ENCODE measurements at regions of chr4 and their contacts with region 1.

Region 1: DNA sequence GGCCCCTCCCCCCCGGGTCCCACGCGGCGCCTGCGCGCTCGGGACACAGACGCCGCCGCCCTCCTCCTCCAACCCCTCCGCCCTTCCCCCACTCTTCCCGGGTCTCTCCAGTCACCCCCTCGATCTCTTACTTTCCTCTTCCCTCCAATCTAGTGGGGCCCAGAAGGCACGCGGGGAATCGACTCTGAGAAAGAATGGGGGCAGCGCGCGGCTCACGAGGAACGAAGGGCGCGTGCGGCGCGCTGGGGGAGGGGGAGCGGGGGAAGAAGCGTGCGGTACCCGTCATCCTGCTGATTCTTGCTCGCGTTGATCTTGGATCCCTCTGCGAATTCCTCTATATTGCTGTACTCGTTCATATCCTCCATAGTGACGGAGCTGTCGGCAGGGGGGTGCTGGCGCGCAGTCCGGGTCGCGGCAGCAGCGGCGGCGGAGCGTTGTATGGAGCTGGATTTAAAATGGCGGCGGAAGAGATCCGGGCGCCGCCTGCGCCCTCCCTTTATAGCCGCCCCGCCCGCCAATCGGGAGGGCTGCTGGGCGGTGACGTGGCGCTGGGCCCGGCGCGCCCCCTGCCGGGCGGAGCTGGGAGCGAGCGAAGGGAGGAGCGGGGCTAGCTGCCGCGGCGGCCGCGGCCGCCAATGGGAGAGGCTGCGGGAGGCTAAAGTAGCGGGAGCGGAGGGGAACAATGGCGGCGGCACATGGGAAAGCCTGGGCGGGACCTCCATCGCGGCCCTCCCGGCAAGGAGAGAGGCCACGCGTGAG is 1.1 kb downstream of the HNRNPDL start:
- DNase-seq: peak; percentile 57 to 94
- H3K4me3 ChIP-seq: peak overlapping the region; percentile 94 to 95
- H3K27ac ChIP-seq: peak overlapping the region; percentile 98
- H3K4me1 ChIP-seq: peaks cover 3 to 25% of the 10 kb centered on the region in 2 donors
- H3K27me3 ChIP-seq: no peaks in the 10 kb centered on the region
- CTCF ChIP-seq: peak; percentile 84 to 97 (median 92)

Region 2: GRCh38 chr4:81471588-81472288 is 957.4 kb before region 1 on chr4 and contains the start of gene RASGEF1B:
- intact Hi-C with region 1: loop called (anchors 5 kb)
- DNase-seq: peak; percentile 78 to 95
- H3K4me3 ChIP-seq: peak within 1 kb of the TSS; percentile 76 to 94
- H3K27ac ChIP-seq: peak within 1 kb of the TSS; percentile 84 to 92
- H3K4me1 ChIP-seq: peaks cover 0 to 10% of the 10 kb centered on the region in 2 donors
- H3K27me3 ChIP-seq: no peaks in the 10 kb centered on the region
- CTCF ChIP-seq: peak in 1 of 3 experiments; percentile 24
- total RNA-seq, gene RASGEF1B: 8.4 TPM

Region 3: DNA sequence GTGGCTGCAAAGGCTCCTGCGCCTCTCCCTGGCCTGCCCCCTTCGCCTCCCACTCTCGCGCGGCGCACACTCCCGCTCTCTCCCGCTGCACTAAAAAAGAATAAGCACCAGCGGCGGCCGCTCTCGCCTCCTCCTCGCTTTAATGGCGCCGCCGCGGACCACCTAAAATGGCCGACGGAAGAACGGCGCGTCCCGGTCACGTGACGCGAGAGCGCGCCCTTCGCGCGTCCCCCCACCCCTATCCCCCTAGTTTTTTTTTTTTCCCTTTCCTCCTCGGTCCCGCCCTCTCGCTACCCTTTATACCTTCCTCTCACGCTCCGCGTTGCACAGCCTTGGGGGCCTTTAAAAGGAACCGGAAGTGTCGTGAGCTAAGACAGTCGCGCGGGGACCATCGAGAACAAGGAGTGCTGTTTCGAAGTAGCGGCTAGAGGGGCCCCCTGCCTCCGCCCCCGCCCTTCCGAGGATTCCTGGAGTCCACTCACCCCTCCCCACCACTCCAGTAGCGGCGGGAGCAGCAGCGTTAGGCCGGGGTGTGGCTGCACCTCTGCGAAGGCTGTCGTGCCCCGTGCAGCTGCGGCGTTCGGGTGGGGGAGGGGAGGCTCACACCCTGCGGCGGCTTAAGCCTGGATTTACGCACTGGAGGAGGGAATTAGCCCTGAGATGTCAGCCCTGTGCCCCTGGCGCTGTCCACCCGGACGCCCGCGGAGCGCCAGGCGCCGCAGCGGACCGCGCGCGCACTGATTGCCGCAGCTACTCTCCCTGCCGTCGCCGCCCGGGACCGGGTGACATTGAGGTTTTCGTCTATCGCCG is 55.1 kb before region 1 on chr4 and contains the start of gene HNRNPD:
- intact Hi-C with region 1: loop called (anchors 1 kb)
- DNase-seq: peak; percentile 95 to 99
- H3K4me3 ChIP-seq: peak within 1 kb of the TSS; percentile 89 to 99
- H3K27ac ChIP-seq: peak within 1 kb of the TSS; percentile 99
- H3K4me1 ChIP-seq: peaks cover 7 to 18% of the 10 kb centered on the region in 2 donors
- H3K27me3 ChIP-seq: no peaks in the 10 kb centered on the region
- CTCF ChIP-seq: no peak
- total RNA-seq, gene HNRNPD: 102 TPM

Region 4: GRCh38 chr4:82890901-82891706 is 462.0 kb after region 1 on chr4 and contains the start of gene SEC31A:
- intact Hi-C with region 1: loop called (anchors 2 kb)
- DNase-seq: peak; percentile 75 to 97
- H3K4me3 ChIP-seq: peak within 1 kb of the TSS; percentile 87 to 91
- H3K27ac ChIP-seq: peak within 1 kb of the TSS; percentile 98 to 99
- H3K4me1 ChIP-seq: peaks cover 8 to 11% of the 10 kb centered on the region in 2 donors
- H3K27me3 ChIP-seq: no peaks in the 10 kb centered on the region
- CTCF ChIP-seq: peak in 1 of 3 experiments; percentile 20
- total RNA-seq, gene SEC31A: 100 TPM

Region 5: GRCh38 chr4:83012687-83013419 is 583.7 kb after region 1 on chr4:
- intact Hi-C with region 1: loop called (anchors 2 kb)
- DNase-seq: peak; percentile 75 to 97
- H3K4me3 ChIP-seq: peak overlapping the region; percentile 78 to 88
- H3K27ac ChIP-seq: peak overlapping the region; percentile 71 to 89
- H3K4me1 ChIP-seq: peaks cover 0 to 19% of the 10 kb centered on the region in 2 donors
- H3K27me3 ChIP-seq: no peaks in the 10 kb centered on the region
- CTCF ChIP-seq: peak; percentile 60 to 70 (median 63)

Region 6: GRCh38 chr4:83284193-83285054 is 855.3 kb after region 1 on chr4 and contains the start of gene COQ2:
- intact Hi-C with region 1: loop called (anchors 1 kb)
- DNase-seq: peak; percentile 82 to 97
- H3K4me3 ChIP-seq: peak within 1 kb of the TSS; percentile 86 to 91
- H3K27ac ChIP-seq: peak within 1 kb of the TSS; percentile 93 to 94
- H3K4me1 ChIP-seq: peaks cover 0 to 4% of the 10 kb centered on the region in 2 donors
- H3K27me3 ChIP-seq: no peaks in the 10 kb centered on the region
- CTCF ChIP-seq: peak; percentile 23 to 53 (median 36)
- total RNA-seq, gene COQ2: 9.7 TPM

Measured in ascending aorta (tissue), 2 donors.